ENCODE measurements at regions of chr1 and their contacts with region 1.

Region 1: GRCh38 chr1:93078986-93079654 is at the start of gene MTF2:
- DNase-seq: peak; percentile 95
- H3K4me3 Mint-ChIP-seq: peak within 1 kb of the TSS; percentile 100
- H3K27ac Mint-ChIP-seq: peak within 1 kb of the TSS; percentile 94
- H3K4me1 Mint-ChIP-seq: peaks cover 42% of the 10 kb centered on the region
- H3K27me3 Mint-ChIP-seq: no peaks in the 10 kb centered on the region
- total RNA-seq, gene MTF2: 55.5 to 56.6 TPM

Region 2: DNA sequence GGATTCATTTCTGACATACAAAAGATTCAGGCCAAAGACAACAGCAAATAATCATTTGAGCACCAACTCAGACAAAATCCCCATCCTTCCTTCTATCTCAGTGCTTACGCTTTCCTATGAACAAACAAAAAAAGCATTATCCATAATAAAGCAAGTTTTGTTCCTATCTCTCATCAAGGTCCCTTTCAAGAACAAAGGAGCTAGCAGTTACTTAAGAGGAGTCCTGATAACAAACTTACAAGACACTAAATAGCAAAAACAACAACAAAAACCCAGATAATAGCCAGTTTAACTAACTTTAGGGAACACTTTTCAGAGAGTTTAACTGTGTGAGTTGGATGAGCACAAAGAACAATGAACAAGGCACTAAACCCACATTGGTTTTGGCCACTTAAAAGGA is 304.7 kb before region 1 on chr1:
- CTCF ChIA-PET with region 1: no interaction called
- POLR2A ChIA-PET with region 1: no interaction called
- DNase-seq: no peak
- H3K4me3 Mint-ChIP-seq: no peak overlapping the region
- H3K27ac Mint-ChIP-seq: no peak overlapping the region
- H3K4me1 Mint-ChIP-seq: no peaks in the 10 kb centered on the region
- H3K27me3 Mint-ChIP-seq: peaks cover 42% of the 10 kb centered on the region

Region 3: GRCh38 chr1:92843429-92844352 is 235.4 kb before region 1 on chr1:
- CTCF ChIA-PET with region 1: no interaction called
- POLR2A ChIA-PET with region 1: no interaction called
- DNase-seq: no peak
- H3K4me3 Mint-ChIP-seq: no peak overlapping the region
- H3K27ac Mint-ChIP-seq: no peak overlapping the region
- H3K4me1 Mint-ChIP-seq: peaks cover 18% of the 10 kb centered on the region
- H3K27me3 Mint-ChIP-seq: no peaks in the 10 kb centered on the region

Region 4: GRCh38 chr1:92980732-92981647 is 98.1 kb before region 1 on chr1:
- CTCF ChIA-PET with region 1: interaction called, 4 read pairs
- POLR2A ChIA-PET with region 1: interaction called, 11 read pairs
- DNase-seq: peak; percentile 62
- H3K4me3 Mint-ChIP-seq: peak overlapping the region; percentile 59
- H3K27ac Mint-ChIP-seq: peak overlapping the region; percentile 97
- H3K4me1 Mint-ChIP-seq: peaks cover 58% of the 10 kb centered on the region
- H3K27me3 Mint-ChIP-seq: no peaks in the 10 kb centered on the region

Region 5: GRCh38 chr1:93007941-93008577 is 71.1 kb before region 1 on chr1:
- CTCF ChIA-PET with region 1: no interaction called
- POLR2A ChIA-PET with region 1: no interaction called
- DNase-seq: no peak
- H3K4me3 Mint-ChIP-seq: no peak overlapping the region
- H3K27ac Mint-ChIP-seq: no peak overlapping the region
- H3K4me1 Mint-ChIP-seq: no peaks in the 10 kb centered on the region
- H3K27me3 Mint-ChIP-seq: peaks cover 18% of the 10 kb centered on the region

Region 6: GRCh38 chr1:93042187-93043056 is 36.7 kb before region 1 on chr1:
- CTCF ChIA-PET with region 1: interaction called, 4 read pairs
- POLR2A ChIA-PET with region 1: interaction called, 40 read pairs
- DNase-seq: peak; percentile 35
- H3K4me3 Mint-ChIP-seq: peak overlapping the region; percentile 70
- H3K27ac Mint-ChIP-seq: peak overlapping the region; percentile 90
- H3K4me1 Mint-ChIP-seq: peaks cover 39% of the 10 kb centered on the region
- H3K27me3 Mint-ChIP-seq: no peaks in the 10 kb centered on the region

Region 7: GRCh38 chr1:93179886-93180722 is 101.0 kb after region 1 on chr1 and contains the start of gene TMED5:
- CTCF ChIA-PET with region 1: interaction called, 3 read pairs
- POLR2A ChIA-PET with region 1: interaction called, 25 read pairs
- DNase-seq: peak; percentile 98
- H3K4me3 Mint-ChIP-seq: peak within 1 kb of the TSS; percentile 89
- H3K27ac Mint-ChIP-seq: peak within 1 kb of the TSS; percentile 98
- H3K4me1 Mint-ChIP-seq: peaks cover 55% of the 10 kb centered on the region
- H3K27me3 Mint-ChIP-seq: no peaks in the 10 kb centered on the region
- total RNA-seq, gene TMED5: 67.4 to 70.8 TPM